Naive thymus-derived CD8-positive, alpha-beta T cell (primary cell): ENCODE measurements at regions of chr2 and their contacts with region 1.

Region 1: DNA sequence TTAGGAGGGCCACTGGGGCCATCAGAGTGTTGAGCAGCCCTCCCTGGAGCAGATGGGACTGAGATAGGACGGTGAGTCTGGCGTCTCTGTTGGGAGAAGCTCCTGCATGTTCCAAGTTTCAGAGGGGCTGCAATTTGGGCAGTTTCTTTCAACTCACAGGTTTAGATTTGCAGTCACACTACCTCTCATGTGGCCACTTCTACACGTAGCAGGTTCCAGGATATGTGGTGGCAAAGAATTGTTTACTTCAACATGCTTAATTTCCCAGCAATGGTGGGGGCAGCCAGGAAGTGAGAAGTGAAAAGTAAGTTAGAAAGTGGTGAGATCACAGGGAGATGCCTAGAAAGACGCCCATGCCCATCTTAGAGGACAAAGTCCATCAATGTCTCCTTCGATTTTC is 9.3 kb downstream of the NCK2 start:
- DNase-seq: peak in 9 of 10 donors; percentile 41 to 85 (median 71)
- ATAC-seq: peak; percentile 65 to 76
- H3K4me3 Mint-ChIP-seq: peak overlapping the region; percentile 61 to 99 (median 70)
- H3K27ac Mint-ChIP-seq: peak overlapping the region; percentile 82 to 98 (median 93)
- H3K4me1 Mint-ChIP-seq: peaks cover 47 to 100% (median 98%) of the 10 kb centered on the region in 4 donors
- H3K27me3 Mint-ChIP-seq: no peaks in the 10 kb centered on the region

Region 2: GRCh38 chr2:105712981-105713596 is 40.9 kb before region 1 on chr2:
- POLR2A ChIA-PET with region 1: no interaction called
- DNase-seq: no peak
- ATAC-seq: no peak
- H3K4me3 Mint-ChIP-seq: no peak overlapping the region
- H3K27ac Mint-ChIP-seq: no peak overlapping the region
- H3K4me1 Mint-ChIP-seq: peaks cover 0 to 9% (median 3%) of the 10 kb centered on the region in 4 donors
- H3K27me3 Mint-ChIP-seq: no peaks in the 10 kb centered on the region

Region 3: DNA sequence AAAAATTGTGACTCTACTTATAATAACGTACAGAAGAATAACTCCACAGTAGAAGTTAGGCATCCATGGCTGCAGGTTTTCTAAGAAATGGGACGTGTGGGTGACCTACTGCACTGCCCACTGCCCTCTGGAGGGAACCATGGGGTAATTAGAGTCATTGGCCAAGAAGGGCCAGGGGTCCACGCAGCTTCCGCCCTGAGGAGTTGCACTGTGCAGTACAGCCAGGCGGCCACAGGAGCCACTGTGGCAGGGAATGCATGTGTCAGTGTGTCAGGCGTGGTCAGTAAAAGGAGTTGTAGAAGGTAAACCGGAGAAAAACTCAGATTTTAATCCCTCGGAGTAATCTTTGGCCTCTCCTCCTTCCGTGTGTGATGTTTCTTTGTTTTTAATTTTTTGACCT is 15.5 kb after region 1 on chr2:
- POLR2A ChIA-PET with region 1: interaction called, 21 read pairs
- DNase-seq: no peak
- ATAC-seq: peak in 1 of 2 donors; percentile 19
- H3K4me3 Mint-ChIP-seq: peak overlapping the region in 9 of 10 donors; percentile 38 to 69 (median 51)
- H3K27ac Mint-ChIP-seq: peak overlapping the region; percentile 67 to 99 (median 92)
- H3K4me1 Mint-ChIP-seq: peaks cover 63 to 100% (median 98%) of the 10 kb centered on the region in 4 donors
- H3K27me3 Mint-ChIP-seq: no peaks in the 10 kb centered on the region

Region 4: GRCh38 chr2:105866216-105867185 is 112.5 kb after region 1 on chr2:
- POLR2A ChIA-PET with region 1: no interaction called
- DNase-seq: no peak
- ATAC-seq: no peak
- H3K4me3 Mint-ChIP-seq: peak overlapping the region in 1 of 10 donors; percentile 27
- H3K27ac Mint-ChIP-seq: peak overlapping the region in 4 of 10 donors; percentile 32 to 86 (median 51)
- H3K4me1 Mint-ChIP-seq: peaks cover 53 to 98% (median 91%) of the 10 kb centered on the region in 4 donors
- H3K27me3 Mint-ChIP-seq: no peaks in the 10 kb centered on the region